Heart left ventricle (tissue), 16 donors: ENCODE measurements at regions of chr1 and their contacts with region 1.

Region 1: DNA sequence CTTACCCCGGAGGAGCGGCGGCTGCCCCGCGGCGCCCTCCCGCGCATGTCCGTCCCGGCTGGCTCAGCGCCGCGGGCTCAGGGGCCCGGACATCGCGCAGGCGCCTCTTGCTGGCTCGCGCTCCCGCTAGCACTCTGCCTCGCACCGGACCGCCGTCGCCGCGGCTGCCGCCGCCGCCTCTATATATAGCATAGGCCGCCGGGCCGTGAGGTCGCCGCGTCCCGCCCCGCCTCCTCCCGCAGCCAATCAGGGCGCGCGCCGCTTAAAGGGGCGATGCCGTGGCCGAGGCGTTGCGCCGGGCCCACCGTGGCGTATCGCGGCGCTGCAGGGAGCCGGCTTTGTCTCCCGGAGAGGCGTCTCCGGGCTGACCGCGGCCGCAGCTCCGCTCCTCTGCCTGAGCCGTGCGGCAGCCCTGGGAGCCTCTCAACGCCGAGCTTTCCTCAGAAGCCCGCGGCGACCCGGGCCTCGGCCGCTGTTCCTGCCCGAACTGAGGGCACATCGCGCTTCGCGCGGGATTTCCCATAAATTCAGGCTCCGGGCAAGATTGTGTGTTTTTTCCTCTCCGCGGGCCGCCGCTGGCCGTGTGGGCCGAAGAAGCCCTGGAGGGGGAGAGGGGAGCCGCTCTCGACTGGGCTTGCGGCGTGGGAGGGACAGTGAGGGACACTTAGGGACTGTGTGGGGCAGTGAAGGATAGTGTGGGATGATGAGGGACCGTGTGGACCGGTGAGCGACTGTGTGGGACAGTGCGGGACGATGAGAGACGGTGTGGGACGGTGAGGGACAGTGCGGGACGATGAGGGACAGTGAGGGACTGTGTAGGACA is at the start of gene ERRFI1:
- DNase-seq: peak; percentile 94 to 98 (median 96)
- ATAC-seq: peak; percentile 94 to 98 (median 96)
- H3K4me3 ChIP-seq: peak within 1 kb of the TSS; percentile 66 to 95 (median 86)
- H3K27ac ChIP-seq: peak within 1 kb of the TSS; percentile 61 to 96 (median 88)
- H3K4me1 ChIP-seq: peaks cover 0 to 49% (median 29%) of the 10 kb centered on the region in 12 donors
- H3K27me3 ChIP-seq: peaks cover 0 to 17% (median 0%) of the 10 kb centered on the region in 9 donors
- CTCF ChIP-seq: peak in 3 of 12 donors; percentile 8 to 21 (median 11)
- POLR2A ChIP-seq: peak; percentile 94 to 99
- total RNA-seq, gene ERRFI1: 6.2 to 16.1 (median 12.0) TPM

Region 2: DNA sequence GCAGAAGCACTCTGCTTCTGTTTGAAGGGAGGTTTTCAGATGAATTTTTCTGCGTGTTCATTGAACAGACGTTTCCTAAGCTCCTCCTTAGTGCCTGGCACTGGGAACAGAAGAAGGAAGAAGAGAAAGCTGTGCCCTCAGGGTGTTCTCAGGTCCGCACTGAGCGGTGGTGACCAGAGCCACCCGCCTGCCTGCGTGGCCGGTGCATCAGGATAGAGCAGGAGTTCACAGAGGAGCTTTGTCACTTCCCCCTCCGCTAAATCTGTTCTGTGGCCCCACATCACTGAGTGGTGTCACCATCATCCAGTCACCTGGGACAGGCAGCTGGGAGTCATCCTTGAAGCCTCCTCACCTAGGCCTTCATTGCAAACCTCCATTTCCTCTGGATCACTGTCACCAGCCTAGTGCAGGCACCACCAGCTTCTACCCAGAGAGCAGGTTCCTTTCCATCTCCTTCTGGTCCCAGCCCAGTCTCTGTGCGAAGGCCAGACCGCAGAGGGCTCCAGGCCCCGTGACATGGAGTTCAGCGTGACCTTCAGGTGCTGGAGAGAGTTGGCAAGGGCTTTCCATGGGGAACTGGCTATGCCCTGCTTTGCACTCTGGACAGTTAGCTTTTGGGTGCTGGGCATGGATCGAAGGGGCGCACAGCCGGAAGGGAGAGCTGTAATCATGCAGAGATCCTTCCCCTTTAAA is 43.1 kb before region 1 on chr1:
- intact Hi-C with region 1: loop called in 6 of 10 experiments (anchors 1 to 5 kb)
- DNase-seq: peak in 1 of 5 donors; percentile 41
- ATAC-seq: peak in 3 of 4 donors; percentile 57 to 77 (median 62)
- H3K4me3 ChIP-seq: no peak overlapping the region
- H3K27ac ChIP-seq: no peak overlapping the region
- H3K4me1 ChIP-seq: peaks cover 0 to 24% (median 7%) of the 10 kb centered on the region in 12 donors
- H3K27me3 ChIP-seq: no peaks in the 10 kb centered on the region
- CTCF ChIP-seq: no peak
- POLR2A ChIP-seq: no peak

Region 3: DNA sequence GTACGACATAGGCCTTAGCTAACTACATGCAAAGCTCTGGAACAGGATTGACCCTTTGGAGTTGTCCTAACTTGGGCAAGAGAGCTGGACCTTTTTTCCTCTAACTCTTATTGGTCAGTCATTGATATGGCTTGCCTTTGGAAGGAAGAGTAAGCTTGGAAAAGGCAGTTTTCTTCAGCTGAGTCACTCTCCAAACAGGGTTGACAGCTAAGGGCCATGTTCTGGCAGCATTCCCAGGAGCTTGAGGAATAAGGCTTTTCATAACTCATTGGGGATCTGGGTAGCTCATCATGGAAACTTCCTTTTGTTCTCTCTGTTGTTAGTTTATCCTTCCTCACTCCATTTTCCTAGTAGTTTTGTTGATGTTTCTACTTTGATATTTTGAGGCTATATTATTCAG is 14.2 kb after region 1 on chr1:
- intact Hi-C with region 1: no loop called
- DNase-seq: peak; percentile 65 to 84 (median 76)
- ATAC-seq: peak in 3 of 4 donors; percentile 74 to 92 (median 76)
- H3K4me3 ChIP-seq: no peak overlapping the region
- H3K27ac ChIP-seq: peak overlapping the region in 9 of 12 donors; percentile 5 to 67 (median 49)
- H3K4me1 ChIP-seq: peaks cover 0 to 5% (median 0%) of the 10 kb centered on the region in 12 donors
- H3K27me3 ChIP-seq: no peaks in the 10 kb centered on the region
- CTCF ChIP-seq: no peak
- POLR2A ChIP-seq: no peak

Region 4: DNA sequence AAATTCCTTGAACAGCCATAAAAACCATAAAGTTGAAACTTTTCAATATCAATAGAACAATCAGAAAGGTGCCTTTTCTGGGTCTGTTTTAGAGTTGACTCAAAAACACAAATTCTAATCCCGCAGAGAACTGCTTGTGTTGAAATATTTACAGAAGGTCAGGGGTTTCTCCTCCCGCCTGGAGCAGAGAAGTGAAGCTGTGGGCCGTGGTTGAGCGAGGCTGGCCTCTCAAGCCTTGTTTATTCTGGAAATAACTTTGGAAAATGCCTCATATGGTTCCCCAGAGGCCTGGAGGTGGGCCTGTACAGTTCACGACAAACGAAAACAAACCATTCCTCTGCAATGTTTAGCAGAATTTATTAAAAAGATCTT is 90.5 kb after region 1 on chr1:
- intact Hi-C with region 1: loop called in 1 of 10 experiments (anchors 5 kb)
- DNase-seq: peak; percentile 68 to 81 (median 75)
- ATAC-seq: peak; percentile 84 to 93 (median 90)
- H3K4me3 ChIP-seq: peak overlapping the region in 2 of 12 donors; percentile 23 to 31
- H3K27ac ChIP-seq: peak overlapping the region; percentile 54 to 89 (median 70)
- H3K4me1 ChIP-seq: peaks cover 0 to 59% (median 33%) of the 10 kb centered on the region in 12 donors
- H3K27me3 ChIP-seq: no peaks in the 10 kb centered on the region
- CTCF ChIP-seq: no peak
- POLR2A ChIP-seq: no peak

Region 5: GRCh38 chr1:8211589-8212442 is 185.5 kb after region 1 on chr1:
- intact Hi-C with region 1: loop called in 6 of 10 experiments (anchors 5 to 10 kb)
- DNase-seq: peak in 1 of 5 donors; percentile 64
- ATAC-seq: peak; percentile 36 to 86 (median 66)
- H3K4me3 ChIP-seq: peak overlapping the region in 1 of 12 donors; percentile 12
- H3K27ac ChIP-seq: peak overlapping the region in 2 of 12 donors; percentile 24 to 82
- H3K4me1 ChIP-seq: peaks cover 0 to 44% (median 7%) of the 10 kb centered on the region in 12 donors
- H3K27me3 ChIP-seq: peaks cover 0 to 4% (median 0%) of the 10 kb centered on the region in 9 donors
- CTCF ChIP-seq: no peak
- POLR2A ChIP-seq: no peak

Region 6: GRCh38 chr1:8226747-8227146 is 200.4 kb after region 1 on chr1:
- intact Hi-C with region 1: loop called in 1 of 10 experiments (anchors 5 kb)
- DNase-seq: no peak
- ATAC-seq: no peak
- H3K4me3 ChIP-seq: no peak overlapping the region
- H3K27ac ChIP-seq: no peak overlapping the region
- H3K4me1 ChIP-seq: peaks cover 0 to 14% (median 0%) of the 10 kb centered on the region in 12 donors
- H3K27me3 ChIP-seq: no peaks in the 10 kb centered on the region
- CTCF ChIP-seq: no peak
- POLR2A ChIP-seq: no peak

Region 7: DNA sequence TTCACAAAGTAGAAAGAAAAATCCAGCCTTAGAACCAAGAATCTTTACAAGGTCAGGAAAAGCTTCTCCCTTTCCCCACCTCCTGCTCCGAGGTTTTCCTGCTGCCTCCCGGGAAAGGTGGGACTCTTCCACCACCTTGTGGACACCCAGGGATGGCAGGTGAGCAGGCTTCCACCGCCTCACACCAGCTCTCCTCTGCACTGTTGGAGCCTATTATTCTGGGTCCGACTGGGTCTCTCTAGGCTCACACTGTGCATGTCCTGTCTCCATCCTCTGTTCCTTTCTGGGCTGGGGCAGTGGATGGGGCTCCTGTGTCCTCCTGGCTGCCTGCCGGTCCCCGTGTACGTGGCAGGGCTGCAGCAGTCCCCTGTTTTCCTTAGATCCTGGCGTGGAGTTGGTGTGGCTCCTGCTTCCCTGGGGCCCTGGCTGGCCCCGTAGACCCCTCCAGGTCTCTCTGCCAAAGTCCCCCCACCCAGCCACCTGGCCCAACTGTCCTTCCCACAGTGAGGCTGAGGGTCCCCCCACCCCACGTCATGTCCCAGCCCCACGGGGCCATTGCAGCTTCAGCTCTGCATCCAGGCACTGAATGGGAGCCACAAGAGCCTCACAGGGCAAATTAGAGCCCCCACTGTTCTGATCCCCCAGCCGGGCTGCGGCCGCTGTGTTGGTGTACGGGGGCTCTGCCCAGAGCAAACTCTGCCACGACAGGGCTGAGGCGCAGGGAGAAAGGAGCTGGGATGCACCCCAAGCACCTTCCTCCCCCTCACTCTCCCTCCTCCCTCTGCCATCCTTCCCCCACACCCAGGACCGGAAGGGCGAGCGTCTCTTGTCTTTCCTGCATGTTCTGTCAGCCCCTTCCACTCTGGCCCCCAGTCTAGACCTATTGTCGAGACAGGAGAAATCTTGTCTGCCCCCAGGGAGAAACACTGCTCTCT is 288.2 kb after region 1 on chr1:
- intact Hi-C with region 1: loop called (anchors 1 to 5 kb)
- DNase-seq: peak in 4 of 5 donors; percentile 65 to 69 (median 66)
- ATAC-seq: peak; percentile 64 to 87 (median 80)
- H3K4me3 ChIP-seq: no peak overlapping the region
- H3K27ac ChIP-seq: no peak overlapping the region
- H3K4me1 ChIP-seq: peaks cover 0 to 31% (median 15%) of the 10 kb centered on the region in 12 donors
- H3K27me3 ChIP-seq: peaks cover 0 to 13% (median 0%) of the 10 kb centered on the region in 9 donors
- CTCF ChIP-seq: peak; percentile 60 to 88 (median 82)
- POLR2A ChIP-seq: no peak

Region 8: GRCh38 chr1:8448911-8449661 is 422.7 kb after region 1 on chr1:
- intact Hi-C with region 1: loop called in 1 of 10 experiments (anchors 10 kb)
- DNase-seq: no peak
- ATAC-seq: peak in 3 of 4 donors; percentile 49 to 73 (median 54)
- H3K4me3 ChIP-seq: peak overlapping the region in 6 of 12 donors; percentile 6 to 40 (median 17)
- H3K27ac ChIP-seq: peak overlapping the region in 11 of 12 donors; percentile 12 to 77 (median 70)
- H3K4me1 ChIP-seq: peaks cover 0 to 33% (median 24%) of the 10 kb centered on the region in 12 donors
- H3K27me3 ChIP-seq: no peaks in the 10 kb centered on the region
- CTCF ChIP-seq: no peak
- POLR2A ChIP-seq: no peak